ENCODE measurements at regions of chr1 and their contacts with region 1.

Region 1: DNA sequence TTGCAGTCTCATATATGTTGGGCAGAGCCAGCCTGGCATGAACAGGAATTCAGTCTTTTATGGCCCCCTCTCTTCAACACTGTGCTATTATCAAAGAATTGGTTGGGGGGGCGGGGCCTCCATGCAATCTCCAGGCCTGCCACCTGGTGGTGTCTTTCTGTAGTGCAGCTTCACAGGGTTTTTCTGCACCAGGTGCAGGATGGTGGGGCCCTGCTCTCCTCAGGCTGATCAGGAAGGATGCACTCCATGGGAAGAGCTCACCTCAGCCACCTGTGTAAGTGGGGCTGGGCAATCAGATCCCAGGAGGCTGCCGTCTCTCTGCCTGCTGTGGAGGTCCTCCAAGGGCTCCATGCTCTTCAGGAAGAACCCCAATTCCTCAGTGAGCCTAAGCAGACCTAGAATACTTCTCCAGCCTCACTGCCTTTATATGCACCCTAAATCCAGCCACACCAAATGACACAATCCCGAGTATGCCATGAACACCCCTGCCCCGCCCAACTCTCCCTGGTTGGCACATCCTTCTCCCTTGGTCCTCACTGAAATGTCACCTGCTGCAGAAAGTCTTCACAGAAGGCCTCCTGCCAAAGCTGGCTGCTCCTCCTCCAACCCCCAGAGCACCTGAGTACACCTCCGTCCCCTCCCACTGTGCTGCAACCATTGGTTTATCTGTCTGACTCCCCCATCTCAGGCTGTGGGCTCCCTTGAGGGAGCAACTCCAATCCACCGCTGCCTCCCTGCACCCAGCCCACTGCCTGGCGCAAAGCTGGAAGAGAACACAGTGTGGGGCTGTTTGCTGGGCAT is 16.5 kb downstream of the STK40 start:
- DNase-seq: peak; percentile 95
- H3K4me3 Mint-ChIP-seq: no peak overlapping the region
- H3K27ac Mint-ChIP-seq: peak overlapping the region; percentile 78
- H3K4me1 Mint-ChIP-seq: peaks cover 55% of the 10 kb centered on the region
- H3K27me3 Mint-ChIP-seq: no peaks in the 10 kb centered on the region

Region 2: DNA sequence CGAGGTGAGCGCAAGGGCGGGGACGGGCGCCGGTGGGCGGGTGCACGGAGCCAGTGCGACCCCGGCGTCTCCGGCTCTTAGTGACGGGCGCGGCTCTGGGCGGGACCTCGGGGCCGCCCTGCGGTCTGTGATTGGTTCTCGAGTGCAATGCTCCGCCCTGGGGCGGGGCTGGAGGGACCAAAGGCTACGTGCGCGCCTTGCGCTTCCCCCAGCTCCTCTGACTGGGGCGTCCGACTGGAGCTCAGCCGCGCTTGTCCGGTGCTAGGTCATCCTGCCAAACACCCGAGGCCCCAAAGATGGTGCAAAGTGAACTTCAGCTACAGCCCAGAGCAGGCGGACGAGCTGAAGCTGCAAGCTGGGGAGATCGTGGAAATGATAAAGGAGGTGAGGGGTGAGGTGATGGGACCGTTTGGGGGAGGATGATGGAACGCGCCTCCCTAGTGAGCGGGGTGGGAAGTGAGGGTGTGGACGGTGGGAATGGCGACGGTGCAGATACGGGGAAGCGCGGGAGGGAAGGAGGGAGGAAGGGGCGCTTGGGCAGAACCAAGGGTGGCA is 62.3 kb before region 1 on chr1:
- intact Hi-C with region 1: loop called (anchors 5 kb)
- DNase-seq: peak; percentile 99
- H3K4me3 Mint-ChIP-seq: peak overlapping the region; percentile 93
- H3K27ac Mint-ChIP-seq: peak overlapping the region; percentile 95
- H3K4me1 Mint-ChIP-seq: peaks cover 43% of the 10 kb centered on the region
- H3K27me3 Mint-ChIP-seq: no peaks in the 10 kb centered on the region

Region 3: DNA sequence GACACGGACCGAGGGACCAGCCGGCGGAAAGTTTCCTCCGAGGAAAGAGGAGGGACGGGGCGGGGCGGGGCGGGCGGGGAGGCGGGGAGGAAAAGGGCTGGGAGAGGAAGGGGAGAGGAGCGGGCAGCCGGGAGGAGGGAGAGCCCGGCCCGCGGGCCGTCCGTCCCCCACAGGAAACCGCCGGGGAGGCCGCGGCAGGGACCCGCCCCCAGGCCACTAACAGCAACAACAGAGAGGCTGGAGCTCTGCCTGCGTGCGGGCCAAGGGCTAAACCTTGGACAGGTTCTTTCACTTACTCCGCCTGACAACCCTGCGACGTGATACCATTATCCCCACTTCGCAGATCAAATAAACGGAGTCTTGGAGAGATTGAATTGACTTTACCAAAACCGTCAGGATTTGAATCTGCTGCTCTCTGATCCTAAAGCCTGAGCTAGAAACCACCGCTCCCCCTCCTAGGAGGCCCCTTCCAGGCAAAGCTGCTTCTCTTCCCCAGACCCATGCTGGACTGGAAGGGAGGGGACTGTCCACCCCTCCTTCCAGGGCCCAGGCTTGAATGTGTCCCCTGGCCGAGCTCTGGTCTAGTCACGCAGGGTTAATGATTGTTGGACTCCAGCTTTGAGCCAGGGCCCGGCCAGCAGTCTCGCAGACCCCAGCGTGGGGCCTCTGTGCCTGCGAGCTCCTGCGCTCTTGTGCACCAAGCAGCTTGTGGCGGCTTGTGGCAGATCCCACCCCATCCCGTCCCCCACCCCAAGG is 45.5 kb before region 1 on chr1 and contains the start of gene EVA1B:
- intact Hi-C with region 1: loop called (anchors 5 kb)
- DNase-seq: peak; percentile 89
- H3K4me3 Mint-ChIP-seq: peak within 1 kb of the TSS; percentile 84
- H3K27ac Mint-ChIP-seq: peak within 1 kb of the TSS; percentile 62
- H3K4me1 Mint-ChIP-seq: peaks cover 27% of the 10 kb centered on the region
- H3K27me3 Mint-ChIP-seq: peaks cover 2% of the 10 kb centered on the region
- total RNA-seq, gene EVA1B: 7.5 and 9.0 TPM in 2 replicates

Region 4: GRCh38 chr1:36342481-36343478 is 26.5 kb before region 1 on chr1:
- intact Hi-C with region 1: loop called (anchors 2 kb)
- DNase-seq: peak; percentile 88
- H3K4me3 Mint-ChIP-seq: no peak overlapping the region
- H3K27ac Mint-ChIP-seq: peak overlapping the region; percentile 74
- H3K4me1 Mint-ChIP-seq: peaks cover 12% of the 10 kb centered on the region
- H3K27me3 Mint-ChIP-seq: no peaks in the 10 kb centered on the region

Region 5: GRCh38 chr1:36420836-36421664 is 51.8 kb after region 1 on chr1:
- intact Hi-C with region 1: loop called (anchors 2 kb)
- DNase-seq: peak; percentile 98
- H3K4me3 Mint-ChIP-seq: peak overlapping the region; percentile 26
- H3K27ac Mint-ChIP-seq: peak overlapping the region; percentile 64
- H3K4me1 Mint-ChIP-seq: peaks cover 13% of the 10 kb centered on the region
- H3K27me3 Mint-ChIP-seq: no peaks in the 10 kb centered on the region

Region 6: GRCh38 chr1:36622741-36623648 is 253.7 kb after region 1 on chr1:
- intact Hi-C with region 1: no loop called
- DNase-seq: no peak
- H3K4me3 Mint-ChIP-seq: no peak overlapping the region
- H3K27ac Mint-ChIP-seq: no peak overlapping the region
- H3K4me1 Mint-ChIP-seq: peaks cover 2% of the 10 kb centered on the region
- H3K27me3 Mint-ChIP-seq: peaks cover 3% of the 10 kb centered on the region